ENCODE measurements at regions of chr11 and their contacts with region 1.

Region 1: GRCh38 chr11:6682936-6683861 is at the start of gene MRPL17:
- DNase-seq: peak; percentile 99
- H3K4me3 ChIP-seq: peak within 1 kb of the TSS; percentile 98
- H3K27ac ChIP-seq: peak within 1 kb of the TSS; percentile 92
- H3K4me1 ChIP-seq: no peaks in the 10 kb centered on the region
- H3K27me3 ChIP-seq: no peaks in the 10 kb centered on the region
- CTCF ChIP-seq: peak; percentile 81
- total RNA-seq, gene MRPL17: 34.6 to 75.1 TPM

Region 2: GRCh38 chr11:6389921-6390724 is 293.1 kb before region 1 on chr11 and contains the start of gene SMPD1:
- intact Hi-C with region 1: loop called (anchors 10 kb)
- DNase-seq: peak; percentile 94
- H3K4me3 ChIP-seq: peak within 1 kb of the TSS; percentile 84
- H3K27ac ChIP-seq: peak within 1 kb of the TSS; percentile 74
- H3K4me1 ChIP-seq: peaks cover 4% of the 10 kb centered on the region
- H3K27me3 ChIP-seq: no peaks in the 10 kb centered on the region
- CTCF ChIP-seq: no peak
- total RNA-seq, gene SMPD1: 49.3 to 57.1 TPM

Region 3: DNA sequence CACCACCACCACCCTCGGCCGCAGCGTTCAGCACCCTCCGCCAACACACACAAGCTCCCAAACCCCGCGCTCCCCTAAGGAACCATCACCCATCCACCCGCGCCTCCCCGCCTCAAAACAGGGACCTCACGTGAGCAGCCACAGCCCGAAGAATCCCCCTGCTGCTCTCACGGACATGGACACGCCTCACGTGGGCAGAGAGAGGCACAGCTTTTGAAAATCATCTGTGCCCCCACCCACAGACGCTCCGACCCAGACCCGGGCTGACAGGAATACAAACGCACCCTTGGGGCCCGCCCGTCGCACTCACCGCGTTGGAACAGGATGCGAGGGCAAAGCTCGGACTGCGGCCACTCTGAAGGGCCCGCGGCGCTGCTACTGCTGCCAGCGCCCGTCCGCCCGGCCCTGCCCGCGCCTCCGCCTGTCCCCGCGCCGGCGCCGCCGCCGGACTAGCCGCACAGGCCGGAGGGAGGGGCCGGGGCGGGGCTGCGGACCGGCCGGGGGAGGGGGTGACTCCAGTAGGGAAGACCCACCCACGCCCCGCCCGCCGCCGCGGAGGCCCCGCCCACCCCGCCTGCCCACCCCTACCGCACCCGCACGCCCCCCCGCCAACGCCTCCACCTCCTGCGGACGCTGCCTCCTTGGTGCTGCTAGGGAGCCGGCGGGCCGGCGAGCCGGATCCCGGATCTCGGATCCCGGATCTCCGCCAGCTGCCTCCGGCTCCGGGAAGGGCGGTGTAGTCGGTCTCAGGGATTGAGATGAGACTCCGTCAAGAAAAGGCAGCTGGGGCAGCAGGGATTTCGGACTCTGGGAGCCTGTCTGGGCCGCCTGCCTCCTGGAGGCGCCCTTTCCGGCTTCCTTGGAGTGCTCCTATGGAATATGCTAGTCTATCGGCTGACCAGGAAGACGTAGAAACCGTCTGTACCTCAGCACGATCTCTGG is 209.4 kb before region 1 on chr11 and contains the start of gene TRIM3:
- intact Hi-C with region 1: no loop called
- DNase-seq: peak; percentile 96
- H3K4me3 ChIP-seq: peak within 1 kb of the TSS; percentile 58
- H3K27ac ChIP-seq: peak within 1 kb of the TSS; percentile 92
- H3K4me1 ChIP-seq: peaks cover 9% of the 10 kb centered on the region
- H3K27me3 ChIP-seq: no peaks in the 10 kb centered on the region
- CTCF ChIP-seq: no peak
- total RNA-seq, gene TRIM3: 30.0 to 59.0 TPM

Region 4: DNA sequence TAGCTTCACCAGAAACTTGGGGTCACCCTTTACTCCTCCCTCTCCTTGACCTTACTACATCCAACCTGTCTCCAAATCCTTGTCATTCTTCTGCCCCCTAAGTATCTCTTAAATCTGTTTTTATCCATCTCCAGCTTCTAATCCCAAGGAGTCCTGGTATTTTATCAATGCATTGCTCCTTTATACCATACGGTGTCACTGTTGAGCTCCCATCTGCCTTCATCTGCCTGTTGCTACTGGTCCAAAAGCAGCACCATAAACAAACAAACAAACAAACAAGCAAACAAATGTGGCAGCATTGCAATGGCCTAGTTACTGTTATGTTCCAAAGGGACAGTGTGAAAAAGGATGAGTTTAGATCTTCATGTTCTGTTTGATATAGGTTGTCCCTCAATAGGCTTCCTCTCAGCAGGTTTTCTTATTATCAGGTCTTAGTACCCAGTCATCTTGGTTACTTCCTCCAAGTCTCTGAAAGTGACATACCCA is 151.9 kb before region 1 on chr11:
- intact Hi-C with region 1: loop called (anchors 5 kb)
- DNase-seq: no peak
- H3K4me3 ChIP-seq: no peak overlapping the region
- H3K27ac ChIP-seq: no peak overlapping the region
- H3K4me1 ChIP-seq: no peaks in the 10 kb centered on the region
- H3K27me3 ChIP-seq: no peaks in the 10 kb centered on the region
- CTCF ChIP-seq: peak; percentile 67

Region 5: GRCh38 chr11:6603287-6604080 is 79.7 kb before region 1 on chr11 and contains the starts of genes ILK and RRP8:
- intact Hi-C with region 1: loop called (anchors 5 kb)
- DNase-seq: peak; percentile 93
- H3K4me3 ChIP-seq: peak within 1 kb of the TSS; percentile 77
- H3K27ac ChIP-seq: peak within 1 kb of the TSS; percentile 89
- H3K4me1 ChIP-seq: peaks cover 18% of the 10 kb centered on the region
- H3K27me3 ChIP-seq: no peaks in the 10 kb centered on the region
- CTCF ChIP-seq: no peak
- total RNA-seq, gene ILK: 115 to 157 TPM
- total RNA-seq, gene RRP8: 17.5 to 25.7 TPM

Region 6: DNA sequence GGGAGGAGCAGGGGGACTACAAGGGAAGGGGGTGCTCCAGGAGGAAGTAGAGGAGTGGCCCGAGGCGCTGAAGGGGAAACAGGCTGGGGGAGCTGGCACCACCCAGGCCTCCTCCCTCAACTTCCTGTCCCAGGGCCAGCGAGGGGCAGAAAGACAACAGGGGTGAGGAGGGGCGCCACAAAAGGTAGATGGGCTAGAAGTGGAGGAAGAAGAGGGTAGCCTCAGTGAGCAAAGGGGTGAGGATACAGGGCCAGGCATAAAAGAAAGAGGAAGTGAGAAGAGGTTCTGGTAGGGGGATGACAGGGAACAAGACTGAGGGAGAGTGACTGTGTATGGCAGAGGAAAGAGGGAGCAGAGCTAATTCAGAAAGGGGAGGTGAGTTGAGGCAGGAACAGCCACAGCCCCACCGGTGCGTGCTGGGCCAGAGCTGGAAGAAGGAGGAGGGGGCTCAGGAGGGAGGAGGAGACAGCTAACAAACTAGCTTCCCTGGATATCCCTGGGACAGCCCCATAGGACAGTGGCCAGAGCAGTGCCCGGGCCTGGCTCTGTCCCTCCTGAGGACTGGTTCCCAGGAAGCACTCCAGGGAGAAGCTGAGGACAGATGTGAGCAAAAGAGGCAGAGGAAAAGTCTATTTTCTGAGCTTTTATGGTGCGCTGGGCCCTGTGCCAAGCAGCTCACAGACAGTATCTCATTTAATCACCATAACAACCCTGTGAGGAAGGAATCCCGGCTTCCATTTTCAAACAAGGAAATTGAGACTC is 36.1 kb before region 1 on chr11:
- intact Hi-C with region 1: loop called (anchors 5 kb)
- DNase-seq: peak; percentile 34
- H3K4me3 ChIP-seq: no peak overlapping the region
- H3K27ac ChIP-seq: peak overlapping the region; percentile 64
- H3K4me1 ChIP-seq: peaks cover 3% of the 10 kb centered on the region
- H3K27me3 ChIP-seq: no peaks in the 10 kb centered on the region
- CTCF ChIP-seq: no peak

Region 7: DNA sequence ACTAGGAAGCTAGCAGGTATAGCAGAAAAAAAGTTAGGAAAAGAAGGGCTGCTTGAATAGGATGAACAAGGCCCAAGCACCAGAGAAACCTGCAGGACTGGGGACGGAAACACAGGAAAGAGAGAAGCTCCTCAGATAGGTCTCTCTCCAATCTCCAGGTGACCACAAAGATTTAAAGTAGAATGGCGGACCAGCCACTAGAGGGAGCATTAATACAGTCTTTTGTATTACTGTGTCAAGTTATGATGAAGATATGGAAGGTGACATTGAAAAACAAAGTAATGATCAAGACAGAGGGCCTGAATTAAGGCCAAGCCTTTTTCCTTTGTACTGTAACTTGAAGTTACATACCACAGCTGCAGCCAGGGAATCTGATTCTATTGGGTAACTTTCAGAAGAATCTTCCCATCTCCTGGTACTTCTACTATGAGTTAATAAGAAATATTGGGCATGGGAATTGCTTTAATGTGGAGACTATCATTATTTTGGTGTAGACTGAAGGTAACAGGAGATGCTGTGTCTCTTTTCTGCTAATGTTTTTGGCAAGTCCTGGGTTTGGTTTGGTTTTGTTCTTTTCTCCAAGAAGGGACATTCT is 54.8 kb after region 1 on chr11:
- intact Hi-C with region 1: no loop called
- DNase-seq: peak; percentile 64
- H3K4me3 ChIP-seq: no peak overlapping the region
- H3K27ac ChIP-seq: no peak overlapping the region
- H3K4me1 ChIP-seq: no peaks in the 10 kb centered on the region
- H3K27me3 ChIP-seq: no peaks in the 10 kb centered on the region
- CTCF ChIP-seq: no peak

Region 8: GRCh38 chr11:6895010-6895409 is 211.8 kb after region 1 on chr11:
- intact Hi-C with region 1: no loop called
- DNase-seq: no peak
- H3K4me3 ChIP-seq: no peak overlapping the region
- H3K27ac ChIP-seq: no peak overlapping the region
- H3K4me1 ChIP-seq: no peaks in the 10 kb centered on the region
- H3K27me3 ChIP-seq: no peaks in the 10 kb centered on the region
- CTCF ChIP-seq: no peak

Region 9: DNA sequence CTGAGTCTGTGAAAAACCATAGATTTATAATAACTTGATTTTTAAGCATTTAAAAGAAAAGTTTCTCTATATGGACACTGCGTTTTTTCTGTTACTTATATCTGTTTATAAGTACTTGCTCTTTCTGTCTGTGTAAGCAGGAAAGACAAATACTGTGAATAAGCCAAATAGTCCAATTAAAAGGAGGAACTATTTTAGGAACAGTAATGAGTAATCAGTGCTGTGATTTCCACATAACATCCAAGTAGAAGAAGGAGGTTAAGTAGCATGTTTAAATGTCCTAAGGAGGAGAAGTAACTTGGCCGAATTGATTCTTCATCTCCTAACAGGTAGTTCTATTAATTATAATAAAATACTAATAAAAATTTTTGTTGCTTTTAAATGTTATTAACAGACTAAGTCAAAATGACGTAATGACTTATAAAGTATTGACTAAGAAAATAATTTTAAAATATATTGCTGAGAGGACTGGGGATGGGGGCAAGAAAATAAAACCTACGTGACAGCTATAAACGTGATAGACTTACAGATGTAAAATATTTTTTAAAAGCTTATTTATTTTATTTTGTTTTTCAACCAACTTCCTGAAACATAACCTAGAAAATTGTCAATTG is 296.3 kb after region 1 on chr11:
- intact Hi-C with region 1: no loop called
- DNase-seq: no peak
- H3K4me3 ChIP-seq: no peak overlapping the region
- H3K27ac ChIP-seq: no peak overlapping the region
- H3K4me1 ChIP-seq: no peaks in the 10 kb centered on the region
- H3K27me3 ChIP-seq: no peaks in the 10 kb centered on the region
- CTCF ChIP-seq: no peak

Measured in colonic mucosa (tissue), 4 donors.